Panc1 (cell line): ENCODE measurements at regions of chr6 and their contacts with region 1.

Region 1: GRCh38 chr6:169099411-169100202 is 154.0 kb downstream of the THBS2 start:
- DNase-seq: no peak
- ATAC-seq: no peak
- H3K4me3 ChIP-seq: no peak overlapping the region
- H3K27ac ChIP-seq: no peak overlapping the region
- H3K4me1 ChIP-seq: no peaks in the 10 kb centered on the region
- H3K27me3 ChIP-seq: no peaks in the 10 kb centered on the region
- CTCF ChIP-seq: no peak

Region 2: DNA sequence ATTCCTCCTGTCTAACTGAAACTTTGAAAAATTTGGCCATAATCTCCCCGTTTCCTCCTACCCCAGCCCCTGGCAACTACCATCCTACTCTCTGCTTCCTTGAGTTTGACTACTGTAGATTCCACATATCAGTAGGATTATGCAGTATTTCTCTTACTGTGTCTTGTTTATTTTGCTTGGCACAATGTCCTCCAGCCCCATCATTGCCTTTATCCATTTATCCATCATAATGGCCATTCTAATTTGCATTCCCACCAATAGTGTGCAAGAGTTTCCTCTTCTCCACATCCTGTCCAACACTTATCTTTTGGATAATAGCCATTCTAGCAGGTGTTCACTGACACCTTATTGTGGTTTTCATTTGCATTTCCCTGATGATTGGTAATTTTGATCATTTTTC is 48.2 kb before region 1 on chr6:
- CTCF ChIA-PET with region 1: no interaction called
- POLR2A ChIA-PET with region 1: no interaction called
- in situ Hi-C with region 1: no loop called
- intact Hi-C with region 1: loop called (anchors 1 kb)
- DNase-seq: no peak
- ATAC-seq: no peak
- H3K4me3 ChIP-seq: no peak overlapping the region
- H3K27ac ChIP-seq: no peak overlapping the region
- H3K4me1 ChIP-seq: no peaks in the 10 kb centered on the region
- H3K27me3 ChIP-seq: no peaks in the 10 kb centered on the region
- CTCF ChIP-seq: no peak

Region 3: GRCh38 chr6:169172446-169172845 is 72.8 kb after region 1 on chr6:
- CTCF ChIA-PET with region 1: no interaction called
- POLR2A ChIA-PET with region 1: no interaction called
- in situ Hi-C with region 1: no loop called
- intact Hi-C with region 1: no loop called
- DNase-seq: no peak
- ATAC-seq: peak; percentile 77
- H3K4me3 ChIP-seq: 0 out of 4 replicates have a peak overlapping the region, but pooled peaks of 1 of the 2 experiments have one; percentile 8
- H3K27ac ChIP-seq: no peak overlapping the region
- H3K4me1 ChIP-seq: peaks cover 7% of the 10 kb centered on the region; the same call in 1 of the 2 replicates
- H3K27me3 ChIP-seq: no peaks in the 10 kb centered on the region
- CTCF ChIP-seq: no peak

Region 4: GRCh38 chr6:169194737-169195136 is 95.1 kb after region 1 on chr6:
- CTCF ChIA-PET with region 1: no interaction called
- POLR2A ChIA-PET with region 1: no interaction called
- in situ Hi-C with region 1: no loop called
- intact Hi-C with region 1: no loop called
- DNase-seq: no peak
- ATAC-seq: no peak
- H3K4me3 ChIP-seq: no peak overlapping the region
- H3K27ac ChIP-seq: no peak overlapping the region
- H3K4me1 ChIP-seq: no peaks in the 10 kb centered on the region
- H3K27me3 ChIP-seq: no peaks in the 10 kb centered on the region
- CTCF ChIP-seq: no peak